Panc1 (cell line): ENCODE measurements at regions of chr6 and their contacts with region 1.

Region 1: GRCh38 chr6:107020239-107020638 is 7.8 kb upstream of the MTRES1 start:
- DNase-seq: no peak
- ATAC-seq: no peak
- H3K4me3 ChIP-seq: no peak overlapping the region
- H3K27ac ChIP-seq: no peak overlapping the region
- H3K4me1 ChIP-seq: peaks cover 8% of the 10 kb centered on the region; the same call in 1 of the 2 replicates
- H3K27me3 ChIP-seq: no peaks in the 10 kb centered on the region
- CTCF ChIP-seq: no peak

Region 2: DNA sequence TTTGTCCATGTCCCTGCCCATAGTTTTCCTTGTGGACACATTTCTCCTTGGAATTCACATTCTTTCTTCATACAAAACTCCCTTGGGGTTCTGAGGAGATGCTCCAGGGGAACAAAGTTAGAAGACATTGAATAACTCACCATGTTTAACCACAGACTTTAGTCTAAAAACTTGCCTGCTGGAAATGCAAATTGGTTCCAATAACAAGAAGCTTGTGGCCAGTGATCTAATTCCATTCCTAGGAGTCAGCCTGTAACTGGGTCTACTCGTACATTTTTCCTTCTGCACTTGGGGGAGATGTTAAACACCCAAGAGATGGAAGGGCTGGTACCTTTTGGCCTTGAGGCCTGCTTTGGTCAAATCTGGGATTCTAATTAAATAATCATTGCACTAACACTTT is 743.7 kb after region 1 on chr6:
- CTCF ChIA-PET with region 1: no interaction called
- POLR2A ChIA-PET with region 1: interaction called, 19 read pairs
- in situ Hi-C with region 1: no loop called
- intact Hi-C with region 1: no loop called
- DNase-seq: no peak
- ATAC-seq: no peak
- H3K4me3 ChIP-seq: no peak overlapping the region
- H3K27ac ChIP-seq: no peak overlapping the region
- H3K4me1 ChIP-seq: no peaks in the 10 kb centered on the region
- H3K27me3 ChIP-seq: peaks cover 9% of the 10 kb centered on the region; the same call in 1 of the 2 replicates
- CTCF ChIP-seq: no peak